ENCODE measurements at regions of chr13 and their contacts with region 1.

Region 1: GRCh38 chr13:64793131-64793530 is 2437.0 kb downstream of the PCDH9 start:
- DNase-seq: no peak
- ATAC-seq: no peak
- H3K4me3 ChIP-seq: no peak overlapping the region
- H3K27ac ChIP-seq: no peak overlapping the region
- H3K4me1 ChIP-seq: no peaks in the 10 kb centered on the region
- H3K27me3 ChIP-seq: no peaks in the 10 kb centered on the region
- CTCF ChIP-seq: no peak
- POLR2A ChIP-seq: no peak
- RAD21 ChIP-seq: no peak

Region 2: DNA sequence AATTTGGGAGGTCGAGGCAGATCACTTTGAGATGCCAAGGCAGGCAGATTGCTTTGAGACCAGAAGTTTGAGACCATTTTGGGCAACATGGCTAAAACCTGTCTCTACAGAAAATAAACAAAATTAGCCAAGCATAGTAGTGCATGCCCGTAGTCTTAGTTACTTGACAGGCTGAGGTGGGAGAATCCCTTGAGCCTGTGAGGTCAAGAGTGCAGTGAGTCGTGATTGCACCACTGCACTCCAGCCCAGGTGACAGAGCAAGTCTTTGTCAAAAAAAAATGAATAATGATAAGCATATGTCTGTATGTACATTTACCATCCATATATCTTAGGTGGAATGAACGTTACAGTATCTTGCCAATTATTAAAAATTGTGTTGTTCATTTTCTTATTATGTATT is 10.7 kb before region 1 on chr13:
- CTCF ChIA-PET with region 1: no interaction called
- POLR2A ChIA-PET with region 1: no interaction called
- RAD21 ChIA-PET with region 1: interaction called in 1 of 2 experiments, 3 read pairs
- intact Hi-C with region 1: loop called (anchors 1 kb)
- DNase-seq: no peak
- ATAC-seq: no peak
- H3K4me3 ChIP-seq: no peak overlapping the region
- H3K27ac ChIP-seq: no peak overlapping the region
- H3K4me1 ChIP-seq: no peaks in the 10 kb centered on the region
- H3K27me3 ChIP-seq: no peaks in the 10 kb centered on the region
- CTCF ChIP-seq: no peak
- POLR2A ChIP-seq: no peak
- RAD21 ChIP-seq: no peak